ENCODE measurements at regions of chr15 and their contacts with region 1.

Region 1: DNA sequence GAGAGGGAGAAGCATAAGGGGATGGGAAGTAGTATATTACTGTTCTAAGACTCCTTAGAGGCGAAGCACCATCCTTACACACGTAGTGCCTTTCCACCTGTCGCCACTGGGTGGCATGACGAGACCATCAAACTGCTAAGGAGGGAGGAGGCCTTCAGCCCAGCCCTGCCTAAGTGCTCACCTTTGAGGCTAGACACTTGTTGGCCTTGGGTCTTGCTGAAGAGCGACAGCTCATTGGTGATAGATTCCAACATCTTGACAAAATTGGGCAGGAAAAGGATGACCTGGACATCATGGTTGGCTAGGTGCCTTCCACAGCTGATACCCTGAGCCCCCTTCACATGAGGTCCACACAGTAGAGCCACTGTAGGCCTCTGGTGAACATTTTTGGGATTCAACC is 19.6 kb downstream of the CLK3 start:
- DNase-seq: peak in 2 of 3 donors; percentile 63 to 65
- ATAC-seq: peak; percentile 71 to 75 (median 74)
- H3K4me3 ChIP-seq: no peak overlapping the region
- H3K27ac ChIP-seq: no peak overlapping the region
- H3K4me1 ChIP-seq: peaks cover 0 to 11% (median 5%) of the 10 kb centered on the region in 4 donors
- H3K27me3 ChIP-seq: no peaks in the 10 kb centered on the region
- CTCF ChIP-seq: peak; percentile 82 to 94 (median 88)
- POLR2A ChIP-seq: no peak

Region 2: DNA sequence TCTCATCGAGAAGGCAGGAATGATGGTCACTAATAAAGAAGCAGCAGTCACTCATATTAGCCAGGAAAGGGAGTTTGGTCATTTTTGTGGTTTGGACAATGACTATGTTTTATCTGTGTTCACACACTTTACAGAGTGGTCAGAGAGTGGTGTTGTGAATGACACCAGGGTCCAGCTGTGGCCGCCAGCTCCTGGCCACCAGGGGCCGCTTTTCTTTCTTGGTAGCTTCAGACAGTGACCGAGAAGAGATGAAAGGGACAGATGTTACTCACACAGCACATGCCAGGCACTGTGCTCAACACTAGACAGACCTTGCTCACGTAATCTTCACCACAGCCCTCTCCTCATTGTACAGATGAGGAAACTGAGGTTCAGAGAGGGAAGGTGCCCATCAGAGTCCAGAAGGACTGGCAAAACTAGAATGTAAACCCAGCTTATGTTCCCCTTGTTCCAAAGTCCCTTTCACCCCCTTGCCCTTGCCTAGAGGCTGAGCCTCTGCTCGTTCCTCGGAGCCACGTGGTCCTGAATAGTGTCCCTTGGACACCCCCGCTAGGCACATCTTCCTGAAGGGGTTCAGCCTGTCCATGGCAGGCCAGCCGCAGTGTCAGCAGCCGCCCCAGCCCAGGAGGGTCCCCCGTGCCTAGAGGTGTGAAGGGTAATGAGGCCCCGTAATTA is 323.4 kb before region 1 on chr15:
- intact Hi-C with region 1: no loop called
- DNase-seq: peak in 1 of 3 donors; percentile 43
- ATAC-seq: peak; percentile 25 to 64 (median 52)
- H3K4me3 ChIP-seq: no peak overlapping the region
- H3K27ac ChIP-seq: no peak overlapping the region
- H3K4me1 ChIP-seq: no peaks in the 10 kb centered on the region
- H3K27me3 ChIP-seq: no peaks in the 10 kb centered on the region
- CTCF ChIP-seq: peak; percentile 22 to 59 (median 54)
- POLR2A ChIP-seq: no peak

Region 3: GRCh38 chr15:74768771-74769342 is 133.6 kb after region 1 on chr15:
- intact Hi-C with region 1: loop called (anchors 2 to 5 kb)
- DNase-seq: peak in 2 of 3 donors; percentile 67 to 72
- ATAC-seq: peak; percentile 68 to 75 (median 74)
- H3K4me3 ChIP-seq: no peak overlapping the region
- H3K27ac ChIP-seq: no peak overlapping the region
- H3K4me1 ChIP-seq: peaks cover 0 to 4% (median 0%) of the 10 kb centered on the region in 4 donors
- H3K27me3 ChIP-seq: no peaks in the 10 kb centered on the region
- CTCF ChIP-seq: peak; percentile 71 to 89 (median 73)
- POLR2A ChIP-seq: no peak

Region 4: GRCh38 chr15:74857082-74857655 is 221.9 kb after region 1 on chr15:
- intact Hi-C with region 1: no loop called
- DNase-seq: no peak
- ATAC-seq: peak in 2 of 4 donors; percentile 34 to 72
- H3K4me3 ChIP-seq: no peak overlapping the region
- H3K27ac ChIP-seq: no peak overlapping the region
- H3K4me1 ChIP-seq: peaks cover 0 to 5% (median 0%) of the 10 kb centered on the region in 4 donors
- H3K27me3 ChIP-seq: no peaks in the 10 kb centered on the region
- CTCF ChIP-seq: no peak
- POLR2A ChIP-seq: no peak

Measured in right lobe of liver (tissue), 6 donors.